ENCODE measurements at regions of chr17 and their contacts with region 1.

Region 1: DNA sequence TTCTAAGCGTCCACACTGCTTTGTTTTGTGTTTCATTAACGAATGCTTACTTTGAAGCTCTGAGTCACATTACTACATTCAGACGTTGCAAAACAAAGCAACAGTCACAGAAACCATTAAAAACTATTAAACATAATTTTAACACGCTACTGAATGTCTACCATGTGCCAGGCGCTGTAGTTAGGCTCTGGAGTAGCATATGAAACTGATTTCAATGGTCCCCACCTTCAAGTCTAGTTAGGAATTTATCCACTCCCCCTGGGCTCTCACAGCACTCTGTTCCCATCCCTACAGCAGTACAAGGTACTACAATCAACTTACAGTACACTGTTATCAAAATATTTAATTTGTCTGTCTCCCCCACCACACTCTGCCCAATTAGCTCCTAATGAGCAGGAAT is 631 bp downstream of the UTP6 start:
- DNase-seq: no peak
- H3K4me3 Mint-ChIP-seq: no peak overlapping the region
- H3K27ac Mint-ChIP-seq: no peak overlapping the region
- H3K4me1 Mint-ChIP-seq: peaks cover 5% of the 10 kb centered on the region
- H3K27me3 Mint-ChIP-seq: no peaks in the 10 kb centered on the region

Region 2: GRCh38 chr17:31558748-31559644 is 341.9 kb before region 1 on chr17:
- intact Hi-C with region 1: loop called (anchors 2 kb)
- DNase-seq: peak; percentile 31
- H3K4me3 Mint-ChIP-seq: peak overlapping the region; percentile 76
- H3K27ac Mint-ChIP-seq: peak overlapping the region; percentile 18
- H3K4me1 Mint-ChIP-seq: peaks cover 13% of the 10 kb centered on the region
- H3K27me3 Mint-ChIP-seq: peaks cover 19% of the 10 kb centered on the region

Region 3: DNA sequence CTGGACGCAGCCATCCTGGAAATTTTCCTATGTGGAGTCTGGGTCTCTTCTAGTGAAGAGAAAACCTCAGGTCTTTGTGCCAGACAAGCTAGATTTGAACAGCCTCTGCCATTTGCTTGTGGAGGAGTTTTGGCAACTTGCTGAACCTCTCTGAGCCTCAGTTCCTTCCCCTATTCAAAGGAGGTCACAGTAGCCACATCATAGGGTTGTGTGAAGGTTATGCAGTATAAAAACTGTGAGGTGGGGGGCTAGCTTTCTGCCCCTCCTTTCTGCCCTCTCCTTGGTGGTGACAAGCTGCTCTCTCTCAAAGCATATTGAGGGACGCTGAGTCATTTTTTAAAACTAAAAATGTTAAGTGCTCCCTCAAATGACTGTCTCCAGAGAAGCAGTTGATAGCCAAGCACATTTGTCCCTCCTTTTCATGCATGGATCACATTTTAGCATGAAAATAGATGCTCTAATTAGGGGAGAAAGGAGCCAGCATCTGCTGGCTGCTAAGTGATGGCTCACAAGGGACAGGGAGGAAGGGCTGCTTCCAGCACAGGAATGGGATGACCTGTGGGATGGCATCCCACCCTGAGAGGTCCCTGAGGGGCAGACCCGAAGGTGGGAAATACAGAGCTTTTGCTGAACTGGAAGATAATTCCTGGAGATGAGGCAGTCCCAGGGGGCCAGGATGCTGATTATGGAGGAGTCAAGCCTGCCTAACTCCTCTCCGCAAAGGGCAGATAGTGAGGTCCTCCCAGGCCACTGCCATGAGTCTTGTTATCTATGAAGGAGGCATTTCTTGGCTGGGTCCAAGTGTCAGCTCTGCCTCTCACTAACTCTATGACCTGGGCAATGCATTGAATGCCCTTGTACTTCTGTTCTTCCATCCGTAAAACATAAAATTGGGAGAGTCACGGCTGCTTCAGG is 290.6 kb before region 1 on chr17:
- intact Hi-C with region 1: no loop called
- DNase-seq: no peak
- H3K4me3 Mint-ChIP-seq: no peak overlapping the region
- H3K27ac Mint-ChIP-seq: no peak overlapping the region
- H3K4me1 Mint-ChIP-seq: no peaks in the 10 kb centered on the region
- H3K27me3 Mint-ChIP-seq: peaks cover 8% of the 10 kb centered on the region

Region 4: GRCh38 chr17:31877911-31878702 is 22.8 kb before region 1 on chr17:
- intact Hi-C with region 1: loop called (anchors 1 kb)
- DNase-seq: peak; percentile 5
- H3K4me3 Mint-ChIP-seq: peak overlapping the region; percentile 3
- H3K27ac Mint-ChIP-seq: peak overlapping the region; percentile 82
- H3K4me1 Mint-ChIP-seq: peaks cover 13% of the 10 kb centered on the region
- H3K27me3 Mint-ChIP-seq: no peaks in the 10 kb centered on the region

Region 5: DNA sequence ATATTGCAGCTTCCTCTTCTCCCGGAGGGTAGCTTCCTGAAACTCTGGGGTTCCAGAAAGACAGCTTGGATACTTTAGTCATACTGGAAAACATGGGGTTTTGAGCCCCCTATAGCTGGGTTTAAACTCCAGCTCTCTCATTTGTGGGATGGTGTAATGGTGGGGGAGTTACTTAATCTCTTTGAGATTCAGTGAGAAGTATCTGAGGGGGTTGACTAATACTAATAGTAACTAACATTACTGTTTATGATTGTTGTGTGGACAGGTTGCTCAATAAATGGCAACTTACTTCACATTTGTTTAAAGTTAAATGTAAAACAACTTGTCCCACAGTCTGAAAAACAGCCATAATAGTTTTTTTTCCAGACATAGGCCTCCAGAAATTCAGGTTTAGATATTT is 30.9 kb after region 1 on chr17:
- intact Hi-C with region 1: loop called (anchors 1 kb)
- DNase-seq: no peak
- H3K4me3 Mint-ChIP-seq: no peak overlapping the region
- H3K27ac Mint-ChIP-seq: no peak overlapping the region
- H3K4me1 Mint-ChIP-seq: no peaks in the 10 kb centered on the region
- H3K27me3 Mint-ChIP-seq: no peaks in the 10 kb centered on the region

Region 6: GRCh38 chr17:32349854-32350665 is 449.2 kb after region 1 on chr17 and contains the start of gene ZNF207:
- intact Hi-C with region 1: loop called (anchors 1 kb)
- DNase-seq: peak; percentile 94
- H3K4me3 Mint-ChIP-seq: peak within 1 kb of the TSS; percentile 99
- H3K27ac Mint-ChIP-seq: peak within 1 kb of the TSS; percentile 99
- H3K4me1 Mint-ChIP-seq: peaks cover 46% of the 10 kb centered on the region
- H3K27me3 Mint-ChIP-seq: no peaks in the 10 kb centered on the region
- total RNA-seq, gene ZNF207: 268 and 275 TPM in 2 replicates